ENCODE measurements at regions of chr5 and their contacts with region 1.

Region 1: DNA sequence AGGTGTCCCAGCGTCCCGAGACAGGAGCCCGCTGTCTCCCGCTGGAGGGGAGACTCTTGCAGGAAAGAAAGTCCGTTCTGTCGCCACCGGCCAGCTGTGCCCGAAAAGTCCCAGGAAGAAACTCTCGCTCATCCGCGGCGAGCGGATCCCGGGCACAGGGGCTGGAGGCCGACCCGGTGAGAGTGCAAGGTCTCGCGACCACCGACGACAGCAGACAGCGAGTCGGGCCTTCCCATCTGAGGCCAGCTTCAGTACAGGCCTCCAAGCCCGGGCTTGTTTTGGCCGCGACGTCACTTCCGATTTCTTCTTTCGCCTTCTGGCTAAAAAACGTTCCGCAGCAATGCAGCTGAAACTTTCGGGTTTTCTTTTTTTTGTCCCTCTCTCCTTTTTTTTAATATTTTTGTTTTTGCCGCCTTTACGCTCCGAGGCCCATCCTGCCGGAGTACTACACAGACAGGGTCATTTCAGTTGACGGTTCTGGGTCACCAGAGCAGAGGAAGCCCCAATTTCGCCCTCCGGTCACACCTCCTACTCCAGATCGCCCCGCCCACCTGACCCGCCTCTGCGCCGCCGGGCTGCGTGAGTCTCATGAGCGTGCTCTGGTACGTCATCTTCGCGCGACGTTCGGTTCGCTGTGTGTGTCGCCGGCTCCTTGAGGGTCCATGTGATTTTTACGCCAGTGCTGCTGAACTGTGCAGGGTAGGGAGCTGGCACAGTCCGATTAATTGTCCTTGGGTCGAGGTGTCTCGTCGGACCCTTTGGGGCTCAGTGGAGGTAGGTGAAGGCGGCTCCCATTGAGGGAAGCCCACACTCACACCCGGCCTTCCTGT is at the starts of genes ANKRA2 and UTP15:
- DNase-seq: peak; percentile 98
- ATAC-seq: peak; percentile 98 to 99
- H3K4me3 ChIP-seq: peak within 1 kb of the TSS; percentile 64 to 94 (median 91)
- H3K27ac ChIP-seq: peak within 1 kb of the TSS; percentile 88 to 96 (median 95)
- H3K4me1 ChIP-seq: peaks cover 27 to 33% of the 10 kb centered on the region in 2 donors
- H3K27me3 ChIP-seq: no peaks in the 10 kb centered on the region
- CTCF ChIP-seq: no peak
- POLR2A ChIP-seq: peak; percentile 52 to 57
- total RNA-seq, gene ANKRA2: 9.2 to 17.1 (median 12.7) TPM
- total RNA-seq, gene UTP15: 8.3 to 26.9 (median 15.4) TPM

Region 2: GRCh38 chr5:73218552-73219171 is 346.7 kb before region 1 on chr5:
- in situ Hi-C with region 1: no loop called
- intact Hi-C with region 1: no loop called
- DNase-seq: no peak
- ATAC-seq: no peak
- H3K4me3 ChIP-seq: no peak overlapping the region
- H3K27ac ChIP-seq: no peak overlapping the region
- H3K4me1 ChIP-seq: peaks cover 4 to 9% of the 10 kb centered on the region in 2 donors
- H3K27me3 ChIP-seq: peaks cover 37 to 61% (median 48%) of the 10 kb centered on the region in 3 donors
- CTCF ChIP-seq: no peak
- POLR2A ChIP-seq: no peak

Region 3: DNA sequence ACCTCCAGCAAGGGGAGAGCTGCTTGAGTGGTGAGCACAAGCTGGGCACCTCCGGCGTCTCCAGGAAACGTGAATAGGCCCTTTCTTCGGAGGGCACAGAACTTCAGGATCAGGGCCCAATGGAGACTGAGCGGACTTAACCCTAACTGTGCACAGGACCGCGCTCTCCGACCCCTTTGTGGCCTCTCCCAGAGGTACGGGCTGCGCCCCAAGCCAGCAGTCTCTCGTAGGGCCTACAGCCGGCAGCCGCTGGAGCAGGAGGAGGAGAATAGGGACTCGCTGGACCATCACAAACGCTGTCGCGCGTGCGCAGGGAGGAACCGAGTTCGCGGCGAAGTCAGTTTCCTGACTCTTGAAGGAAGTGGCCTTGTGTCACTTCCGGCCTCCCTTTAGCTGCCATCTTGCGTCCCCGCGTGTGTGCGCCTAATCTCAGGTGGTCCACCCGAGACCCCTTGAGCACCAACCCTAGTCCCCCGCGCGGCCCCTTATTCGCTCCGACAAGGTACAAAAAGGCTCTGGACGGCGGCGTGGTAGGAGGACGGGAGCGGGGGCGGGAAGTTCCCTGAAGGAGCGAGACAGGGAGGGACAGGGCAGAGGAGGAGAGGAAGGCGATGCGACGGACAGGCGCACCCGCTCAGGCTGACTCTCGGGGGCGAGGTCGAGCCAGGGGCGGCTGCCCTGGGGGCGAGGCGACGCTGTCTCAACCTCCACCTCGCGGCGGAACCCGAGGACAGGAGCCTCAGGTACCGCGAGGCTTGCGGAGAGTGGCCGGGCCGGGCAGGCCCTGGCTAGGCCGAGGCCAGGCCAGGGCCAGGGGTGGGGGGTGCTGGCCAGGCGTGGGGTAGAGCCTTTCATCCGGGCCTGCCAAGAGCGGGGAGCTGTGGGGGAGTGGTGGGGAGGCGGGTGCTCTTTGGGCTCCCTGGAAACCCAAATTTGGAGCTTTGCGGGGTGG is 67.0 kb before region 1 on chr5 and contains the start of gene BTF3:
- in situ Hi-C with region 1: no loop called
- intact Hi-C with region 1: loop called (anchors 2 kb)
- DNase-seq: peak; percentile 91 to 92
- ATAC-seq: peak; percentile 98 to 99
- H3K4me3 ChIP-seq: peak within 1 kb of the TSS; percentile 87 to 100 (median 98)
- H3K27ac ChIP-seq: peak within 1 kb of the TSS; percentile 90 to 98 (median 94)
- H3K4me1 ChIP-seq: peaks cover 25 to 29% of the 10 kb centered on the region in 2 donors
- H3K27me3 ChIP-seq: no peaks in the 10 kb centered on the region
- CTCF ChIP-seq: no peak
- POLR2A ChIP-seq: peak; percentile 63 to 77
- total RNA-seq, gene BTF3: 517 to 641 (median 546) TPM

Region 4: GRCh38 chr5:73638344-73639095 is 73.2 kb after region 1 on chr5:
- in situ Hi-C with region 1: no loop called
- intact Hi-C with region 1: no loop called
- DNase-seq: no peak
- ATAC-seq: no peak
- H3K4me3 ChIP-seq: no peak overlapping the region
- H3K27ac ChIP-seq: no peak overlapping the region
- H3K4me1 ChIP-seq: no peaks in the 10 kb centered on the region
- H3K27me3 ChIP-seq: no peaks in the 10 kb centered on the region
- CTCF ChIP-seq: no peak
- POLR2A ChIP-seq: no peak

Region 5: GRCh38 chr5:73867345-73868335 is 302.3 kb after region 1 on chr5:
- in situ Hi-C with region 1: no loop called
- intact Hi-C with region 1: no loop called
- DNase-seq: no peak
- ATAC-seq: no peak
- H3K4me3 ChIP-seq: no peak overlapping the region
- H3K27ac ChIP-seq: no peak overlapping the region
- H3K4me1 ChIP-seq: no peaks in the 10 kb centered on the region
- H3K27me3 ChIP-seq: no peaks in the 10 kb centered on the region
- CTCF ChIP-seq: no peak
- POLR2A ChIP-seq: no peak

Region 6: DNA sequence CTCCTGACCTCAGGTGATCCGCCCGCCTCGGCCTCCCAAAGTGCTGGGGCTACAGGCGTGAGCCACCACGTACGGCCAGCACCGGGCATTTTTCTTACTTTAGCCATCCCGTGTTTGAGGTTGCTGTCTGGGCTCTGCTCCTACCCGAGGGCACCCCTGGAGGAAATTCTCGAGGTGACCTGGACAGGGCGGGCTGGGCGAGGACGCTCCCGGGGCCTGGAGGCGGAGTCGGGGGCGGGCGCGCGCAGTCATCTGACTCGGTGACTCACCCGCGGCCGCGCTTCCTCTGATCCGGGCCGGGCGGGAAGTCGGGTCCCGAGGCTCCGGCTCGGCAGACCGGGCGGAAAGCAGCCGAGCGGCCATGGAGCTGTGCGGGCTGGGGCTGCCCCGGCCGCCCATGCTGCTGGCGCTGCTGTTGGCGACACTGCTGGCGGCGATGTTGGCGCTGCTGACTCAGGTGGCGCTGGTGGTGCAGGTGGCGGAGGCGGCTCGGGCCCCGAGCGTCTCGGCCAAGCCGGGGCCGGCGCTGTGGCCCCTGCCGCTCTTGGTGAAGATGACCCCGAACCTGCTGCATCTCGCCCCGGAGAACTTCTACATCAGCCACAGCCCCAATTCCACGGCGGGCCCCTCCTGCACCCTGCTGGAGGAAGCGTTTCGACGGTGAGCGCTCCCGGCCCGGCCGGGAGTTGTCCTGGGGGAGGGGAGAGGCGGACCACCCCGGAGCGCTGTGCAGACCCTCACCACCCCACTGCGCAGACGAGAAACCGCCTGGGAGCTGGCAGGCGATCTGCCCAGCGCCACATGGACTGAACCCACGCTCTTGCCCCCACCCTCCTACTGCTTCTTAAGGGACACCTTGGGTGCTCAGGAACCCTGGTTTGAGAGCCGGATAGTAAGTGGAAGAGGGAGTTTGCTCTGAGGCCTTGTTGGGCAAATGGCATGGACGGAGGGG is 1119.8 kb after region 1 on chr5 and contains the start of gene HEXB:
- in situ Hi-C with region 1: no loop called
- intact Hi-C with region 1: loop called (anchors 10 kb)
- DNase-seq: peak; percentile 80 to 83
- ATAC-seq: peak; percentile 90 to 91
- H3K4me3 ChIP-seq: peak within 1 kb of the TSS; percentile 84 to 96 (median 92)
- H3K27ac ChIP-seq: peak within 1 kb of the TSS; percentile 83 to 90 (median 89)
- H3K4me1 ChIP-seq: peaks cover 7 to 12% of the 10 kb centered on the region in 2 donors
- H3K27me3 ChIP-seq: no peaks in the 10 kb centered on the region
- CTCF ChIP-seq: peak in 1 of 5 experiments; percentile 4
- POLR2A ChIP-seq: peak; percentile 84 to 86
- total RNA-seq, gene HEXB: 32.3 to 54.4 (median 47.1) TPM

Region 7: GRCh38 chr5:74766849-74767578 is 1201.7 kb after region 1 on chr5 and contains the starts of genes GFM2 and NSA2:
- in situ Hi-C with region 1: loop called in 1 of 4 experiments (anchors 25 kb)
- intact Hi-C with region 1: loop called (anchors 5 kb)
- DNase-seq: peak; percentile 86 to 87
- ATAC-seq: peak; percentile 99
- H3K4me3 ChIP-seq: peak within 1 kb of the TSS; percentile 76 to 99 (median 97)
- H3K27ac ChIP-seq: peak within 1 kb of the TSS; percentile 82 to 90 (median 87)
- H3K4me1 ChIP-seq: peaks cover 25 to 29% of the 10 kb centered on the region in 2 donors
- H3K27me3 ChIP-seq: no peaks in the 10 kb centered on the region
- CTCF ChIP-seq: peak in 1 of 5 experiments; percentile 4
- POLR2A ChIP-seq: peak; percentile 21 to 42
- total RNA-seq, gene GFM2: 19.4 to 25.6 (median 23.8) TPM
- total RNA-seq, gene NSA2: 64.4 to 98.2 (median 94.9) TPM

Region 8: DNA sequence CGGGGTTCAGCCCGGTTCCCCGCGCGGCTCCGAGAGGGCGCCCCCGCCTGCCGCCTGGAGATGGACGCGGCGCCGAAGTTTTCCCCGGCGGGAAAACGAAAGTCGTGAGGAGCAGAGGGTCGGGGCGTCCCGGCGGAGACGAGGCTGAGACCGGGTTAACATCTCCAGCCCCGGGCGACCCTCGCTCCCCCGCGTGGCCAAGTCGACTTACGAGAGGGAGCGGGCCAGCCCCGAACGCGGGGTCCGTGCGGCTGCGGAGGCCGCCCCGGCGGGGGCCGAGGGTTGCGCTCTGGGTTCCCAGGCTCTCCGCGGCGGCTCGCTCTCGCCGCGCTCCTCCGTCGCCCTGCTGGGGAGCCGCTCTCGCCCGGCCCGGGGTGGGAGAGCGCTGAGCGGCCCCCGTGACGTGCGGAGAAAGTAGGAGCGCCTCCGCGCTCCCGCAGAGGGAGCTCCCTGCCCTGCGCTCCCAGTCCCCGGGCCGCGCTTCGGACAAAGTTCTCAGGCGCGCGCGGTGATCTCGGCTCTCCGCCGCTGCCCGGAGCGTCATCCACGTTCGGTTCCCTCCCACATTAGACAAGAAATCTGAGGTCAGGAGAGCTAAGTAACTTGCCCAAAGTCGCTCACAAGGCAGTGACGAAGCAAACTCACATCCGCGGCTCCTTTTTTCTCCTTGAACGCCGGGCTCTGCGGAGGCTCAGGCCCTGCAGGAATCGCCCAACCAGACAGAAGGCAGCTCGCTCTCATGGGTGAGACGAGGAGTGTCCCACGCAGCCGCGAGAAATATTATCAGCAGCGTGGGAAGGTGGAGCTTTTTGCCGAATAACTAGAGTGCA is 1488.2 kb after region 1 on chr5:
- in situ Hi-C with region 1: no loop called
- intact Hi-C with region 1: loop called (anchors 10 kb)
- DNase-seq: peak; percentile 11 to 54
- ATAC-seq: peak; percentile 58 to 65
- H3K4me3 ChIP-seq: peak overlapping the region; percentile 74 to 86 (median 77)
- H3K27ac ChIP-seq: peak overlapping the region; percentile 75 to 87 (median 86)
- H3K4me1 ChIP-seq: peaks cover 11 to 15% of the 10 kb centered on the region in 2 donors
- H3K27me3 ChIP-seq: no peaks in the 10 kb centered on the region
- CTCF ChIP-seq: no peak
- POLR2A ChIP-seq: peak; percentile 41 to 50

Region 9: GRCh38 chr5:75511435-75512384 is 1946.4 kb after region 1 on chr5 and contains the starts of genes CERT1 and POLK:
- in situ Hi-C with region 1: no loop called
- intact Hi-C with region 1: loop called (anchors 2 kb)
- DNase-seq: peak; percentile 98
- ATAC-seq: peak; percentile 89 to 91
- H3K4me3 ChIP-seq: peak within 1 kb of the TSS; percentile 87 to 97 (median 94)
- H3K27ac ChIP-seq: peak within 1 kb of the TSS; percentile 92 to 99 (median 96)
- H3K4me1 ChIP-seq: peaks cover 46 to 49% of the 10 kb centered on the region in 2 donors
- H3K27me3 ChIP-seq: no peaks in the 10 kb centered on the region
- CTCF ChIP-seq: no peak
- POLR2A ChIP-seq: peak; percentile 84 to 90
- total RNA-seq, gene CERT1: 30.8 to 50.6 (median 41.9) TPM
- total RNA-seq, gene POLK: 23.9 to 35.8 (median 27.8) TPM